ENCODE measurements at regions of chr21 and their contacts with region 1.

Region 1: GRCh38 chr21:40841524-40842202 is 5.3 kb downstream of the DSCAM start:
- DNase-seq: peak; percentile 57
- ATAC-seq: peak; percentile 83
- H3K4me3 ChIP-seq: peak overlapping the region; percentile 54
- H3K27ac ChIP-seq: no peak overlapping the region
- H3K4me1 ChIP-seq: no peaks in the 10 kb centered on the region
- H3K27me3 ChIP-seq: peaks cover 36% of the 10 kb centered on the region
- CTCF ChIP-seq: peak; percentile 57

Region 2: DNA sequence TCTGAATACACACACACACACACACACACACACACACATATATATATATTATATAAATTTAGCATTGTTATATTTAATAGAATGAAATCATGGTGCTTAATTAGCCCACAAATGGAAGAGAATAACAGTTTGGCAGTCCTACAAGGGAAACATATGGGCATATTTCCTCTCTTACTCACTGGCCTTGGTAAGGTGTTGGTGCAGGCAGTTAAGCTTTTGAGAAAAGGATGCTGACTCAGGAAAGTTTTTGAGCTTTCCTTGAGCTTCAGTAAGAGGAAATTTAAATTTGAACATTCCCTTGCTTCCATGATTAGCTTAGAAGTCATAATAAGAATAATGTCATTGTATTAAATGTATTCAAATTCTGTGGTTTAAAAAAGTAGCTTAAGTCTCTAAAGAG is 1265.9 kb before region 1 on chr21:
- CTCF ChIA-PET with region 1: no interaction called
- POLR2A ChIA-PET with region 1: interaction called, 31 read pairs
- intact Hi-C with region 1: no loop called
- DNase-seq: peak; percentile 35
- ATAC-seq: 0 out of 2 replicates have a peak, but pooled peaks have one; percentile 18
- H3K4me3 ChIP-seq: no peak overlapping the region
- H3K27ac ChIP-seq: no peak overlapping the region
- H3K4me1 ChIP-seq: no peaks in the 10 kb centered on the region
- H3K27me3 ChIP-seq: peaks cover 39% of the 10 kb centered on the region
- CTCF ChIP-seq: no peak

Region 3: DNA sequence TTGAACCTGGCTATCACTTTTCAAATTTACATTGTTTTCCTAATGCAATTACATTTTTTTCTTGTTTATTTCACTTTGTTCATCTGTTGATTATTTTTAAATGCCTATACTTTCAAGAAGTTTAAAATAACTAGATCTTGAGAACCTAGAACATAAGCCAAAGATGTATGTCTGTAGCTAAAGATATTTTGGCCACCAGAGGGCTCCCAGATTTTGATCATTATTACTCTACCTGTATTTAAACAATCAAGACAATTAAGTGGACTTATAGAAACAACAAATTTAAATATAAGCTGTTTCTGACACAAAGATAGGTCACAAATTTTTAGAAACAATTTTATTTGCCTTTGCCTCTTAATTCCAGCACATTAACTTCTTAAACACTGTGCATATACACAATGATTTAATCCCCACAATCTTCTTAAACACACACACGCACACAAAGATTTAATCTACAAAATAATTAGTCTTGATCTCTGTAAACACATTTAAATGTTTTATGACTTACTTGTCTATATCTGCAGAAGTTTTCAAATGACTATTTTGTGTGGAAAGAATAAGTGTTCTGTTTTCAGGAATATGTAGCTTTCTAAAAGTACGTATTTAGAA is 374.7 kb before region 1 on chr21:
- CTCF ChIA-PET with region 1: no interaction called
- POLR2A ChIA-PET with region 1: no interaction called
- intact Hi-C with region 1: loop called (anchors 2 kb)
- DNase-seq: peak; percentile 60
- ATAC-seq: no peak
- H3K4me3 ChIP-seq: no peak overlapping the region
- H3K27ac ChIP-seq: no peak overlapping the region
- H3K4me1 ChIP-seq: no peaks in the 10 kb centered on the region
- H3K27me3 ChIP-seq: 0 out of 2 replicates have a peak, but pooled peaks cover 9% of the 10 kb centered on the region
- CTCF ChIP-seq: peak; percentile 79